ENCODE measurements at regions of chr1 and their contacts with region 1.

Region 1: GRCh38 chr1:226634166-226634588 is 85.6 kb downstream of the STUM start:
- DNase-seq: peak; percentile 76 to 90 (median 87)
- H3K4me3 ChIP-seq: no peak overlapping the region
- H3K27ac ChIP-seq: no peak overlapping the region
- H3K4me1 ChIP-seq: peaks cover 4% of the 10 kb centered on the region
- H3K27me3 ChIP-seq: no peaks in the 10 kb centered on the region
- CTCF ChIP-seq: peak; percentile 82 to 90 (median 88)
- EP300 ChIP-seq: no peak
- POLR2A ChIP-seq: no peak

Region 2: GRCh38 chr1:225191199-225191753 is 1442.9 kb before region 1 on chr1:
- intact Hi-C with region 1: no loop called
- DNase-seq: no peak
- H3K4me3 ChIP-seq: no peak overlapping the region
- H3K27ac ChIP-seq: no peak overlapping the region
- H3K4me1 ChIP-seq: no peaks in the 10 kb centered on the region
- H3K27me3 ChIP-seq: no peaks in the 10 kb centered on the region
- CTCF ChIP-seq: no peak
- EP300 ChIP-seq: no peak
- POLR2A ChIP-seq: no peak

Region 3: DNA sequence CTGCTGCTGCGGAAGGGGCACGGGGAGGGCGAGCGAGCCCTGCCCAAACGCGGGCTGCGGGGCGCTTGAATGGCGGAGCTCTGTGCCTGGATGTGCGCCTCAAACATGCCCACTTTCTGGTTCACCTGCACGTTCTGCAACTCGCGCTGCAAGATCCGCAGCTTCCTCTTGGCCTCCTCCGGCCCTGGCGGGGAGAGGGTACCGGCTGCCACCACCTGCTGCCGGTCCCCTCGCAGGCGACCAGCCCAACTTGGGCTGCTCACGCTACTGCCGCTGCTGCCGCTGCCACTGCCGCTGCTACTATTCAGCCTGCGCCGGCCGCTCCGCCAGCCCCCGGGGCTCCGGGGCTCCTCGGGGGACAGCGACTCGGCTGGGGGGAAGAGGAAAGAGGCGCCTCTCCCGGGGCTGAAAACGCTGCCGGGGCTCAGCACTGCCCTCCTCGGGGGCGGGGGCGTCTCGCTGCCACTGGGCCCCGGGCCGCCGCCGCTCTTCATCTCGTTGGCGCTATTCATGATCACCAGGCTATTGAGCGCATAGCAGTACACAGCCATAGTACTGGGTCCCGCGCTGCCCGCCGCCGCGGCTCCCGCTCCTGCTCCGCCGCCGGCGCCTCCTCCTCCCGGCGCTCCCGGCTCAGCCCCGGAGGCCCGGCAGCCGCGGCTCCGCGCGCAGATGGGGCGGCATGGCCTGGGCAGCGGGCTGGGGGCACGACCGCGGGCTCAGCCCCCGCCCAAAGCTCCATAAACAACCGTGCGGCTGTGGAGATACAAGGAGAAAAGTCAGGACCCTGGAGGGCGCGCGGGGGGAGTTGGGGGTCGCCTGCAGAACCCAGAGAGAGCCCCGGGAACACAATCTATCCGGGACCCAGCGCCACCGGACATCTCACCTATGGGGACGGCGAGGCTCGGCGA is 103.0 kb after region 1 on chr1:
- intact Hi-C with region 1: loop called in 1 of 4 experiments (anchors 5 kb)
- DNase-seq: peak; percentile 27 to 54 (median 39)
- H3K4me3 ChIP-seq: peak overlapping the region; percentile 74
- H3K27ac ChIP-seq: peak overlapping the region; percentile 73 to 75
- H3K4me1 ChIP-seq: peaks cover 14% of the 10 kb centered on the region
- H3K27me3 ChIP-seq: no peaks in the 10 kb centered on the region
- CTCF ChIP-seq: no peak
- EP300 ChIP-seq: no peak
- POLR2A ChIP-seq: no peak

Region 4: DNA sequence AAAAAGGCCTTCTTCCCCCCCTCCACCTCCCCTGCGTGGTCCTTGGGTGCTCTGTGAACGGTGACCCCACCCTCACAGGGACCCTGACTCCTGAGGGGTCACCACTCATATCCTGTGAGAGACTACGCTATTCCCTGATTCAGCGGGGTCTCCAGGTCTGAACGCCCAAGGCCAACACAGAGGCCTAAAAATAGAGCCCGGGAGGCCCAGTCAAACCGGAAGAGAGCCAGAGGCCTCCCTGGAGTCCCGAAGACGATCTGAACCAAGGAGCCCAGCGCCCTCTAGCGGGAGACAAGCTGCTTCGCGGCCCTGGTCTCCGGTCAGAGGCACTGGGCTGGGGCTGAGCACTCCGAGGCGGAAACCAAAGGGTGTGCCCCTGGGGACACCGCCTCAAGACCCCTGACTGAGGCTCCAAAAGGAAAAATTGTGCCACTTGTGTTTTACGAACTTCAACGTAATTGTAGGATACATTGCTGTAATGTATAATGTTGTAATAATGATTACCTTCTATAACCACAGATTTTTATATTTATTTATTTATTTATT is 193.9 kb after region 1 on chr1:
- intact Hi-C with region 1: loop called (anchors 2 to 5 kb)
- DNase-seq: peak; percentile 95 to 98 (median 97)
- H3K4me3 ChIP-seq: no peak overlapping the region
- H3K27ac ChIP-seq: peak overlapping the region; percentile 15 to 69
- H3K4me1 ChIP-seq: no peaks in the 10 kb centered on the region
- H3K27me3 ChIP-seq: no peaks in the 10 kb centered on the region
- CTCF ChIP-seq: peak; percentile 78 to 93 (median 88)
- EP300 ChIP-seq: no peak
- POLR2A ChIP-seq: no peak

Region 5: DNA sequence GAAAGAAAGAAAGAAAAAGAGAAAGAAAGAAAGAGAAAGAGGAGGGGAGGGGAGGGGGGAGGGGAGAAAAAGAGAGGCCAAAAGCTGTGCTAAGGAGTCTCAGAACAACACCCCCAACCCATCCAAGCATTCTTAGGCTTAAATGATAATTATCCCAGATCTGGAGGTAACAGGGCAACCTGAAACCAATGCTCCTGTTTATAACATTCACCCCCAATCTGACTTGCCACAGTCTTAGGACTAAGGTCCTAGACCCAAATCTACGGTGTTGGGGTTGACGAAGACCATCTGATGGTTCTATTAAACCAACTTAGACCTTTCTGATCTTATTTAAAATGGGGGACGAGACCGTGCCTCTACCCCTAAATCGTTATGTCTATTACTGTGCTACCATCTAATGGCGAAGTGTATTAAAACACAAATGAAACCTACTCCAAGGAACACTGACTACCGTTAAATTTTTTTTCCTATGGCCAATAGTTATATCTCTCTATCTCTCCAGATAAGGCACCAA is 803.4 kb after region 1 on chr1:
- intact Hi-C with region 1: loop called in 3 of 4 experiments (anchors 5 to 10 kb)
- DNase-seq: no peak
- H3K4me3 ChIP-seq: peak overlapping the region; percentile 30
- H3K27ac ChIP-seq: no peak overlapping the region
- H3K4me1 ChIP-seq: peaks cover 9% of the 10 kb centered on the region
- H3K27me3 ChIP-seq: no peaks in the 10 kb centered on the region
- CTCF ChIP-seq: peak in 2 of 3 donors; percentile 54 to 57
- EP300 ChIP-seq: no peak
- POLR2A ChIP-seq: no peak

Region 6: GRCh38 chr1:227542143-227543120 is 908.3 kb after region 1 on chr1:
- intact Hi-C with region 1: loop called in 1 of 4 experiments (anchors 10 kb)
- DNase-seq: peak; percentile 81 to 87 (median 85)
- H3K4me3 ChIP-seq: peak overlapping the region; percentile 66
- H3K27ac ChIP-seq: peak overlapping the region; percentile 1 to 65
- H3K4me1 ChIP-seq: peaks cover 7% of the 10 kb centered on the region
- H3K27me3 ChIP-seq: no peaks in the 10 kb centered on the region
- CTCF ChIP-seq: peak; percentile 92 to 93 (median 92)
- EP300 ChIP-seq: no peak
- POLR2A ChIP-seq: no peak

Measured in ovary (tissue), 10 donors.